ENCODE measurements at regions of chr2 and their contacts with region 1.

Region 1: GRCh38 chr2:128321784-128322714 is 3.4 kb upstream of the HS6ST1 start:
- DNase-seq: peak; percentile 86 to 94
- H3K4me3 ChIP-seq: peak overlapping the region; percentile 54 to 58
- H3K27ac ChIP-seq: peak overlapping the region; percentile 72 to 76
- H3K4me1 ChIP-seq: peaks cover 10 to 55% (median 41%) of the 10 kb centered on the region in 4 donors
- H3K27me3 ChIP-seq: no peaks in the 10 kb centered on the region
- CTCF ChIP-seq: peak; percentile 96 to 97

Region 2: DNA sequence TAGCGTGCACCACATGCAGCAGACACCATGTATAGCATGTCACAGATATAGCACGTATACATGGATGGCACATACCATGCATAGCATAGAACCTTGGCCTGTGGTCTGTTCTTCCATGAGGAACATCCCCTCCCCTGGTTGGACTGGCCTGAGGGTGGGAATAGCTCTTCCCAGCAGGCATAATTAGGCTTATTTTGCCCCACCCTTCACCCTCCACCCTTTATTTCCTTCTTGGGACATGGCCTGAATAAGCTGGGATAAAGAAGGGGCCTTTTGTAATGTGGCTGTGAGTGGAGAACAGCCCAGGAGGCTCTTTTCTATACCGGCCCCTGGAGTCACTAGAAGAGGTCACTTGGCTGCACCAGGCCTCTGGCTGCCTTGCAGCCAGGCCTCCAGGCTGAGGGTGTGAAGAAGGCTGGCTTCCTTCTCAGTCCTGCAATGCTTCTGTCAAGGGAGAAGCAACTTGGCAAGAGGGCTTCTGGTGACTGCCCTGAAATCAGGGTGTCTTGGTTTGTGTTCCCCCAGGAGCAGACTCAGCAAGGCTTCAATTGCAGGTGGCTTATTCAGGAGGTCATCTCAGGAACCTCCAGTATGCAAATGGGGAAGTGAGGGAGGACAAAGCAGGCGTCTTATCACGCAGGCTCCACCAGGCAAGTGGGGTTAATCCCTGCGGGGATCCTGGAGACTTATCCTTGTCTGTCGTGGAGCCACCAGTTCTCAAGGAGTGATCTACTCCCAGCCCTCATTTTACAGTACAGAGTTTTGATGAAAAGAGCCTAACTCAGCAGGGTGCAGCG is 71.6 kb before region 1 on chr2:
- intact Hi-C with region 1: no loop called
- DNase-seq: no peak
- H3K4me3 ChIP-seq: no peak overlapping the region
- H3K27ac ChIP-seq: no peak overlapping the region
- H3K4me1 ChIP-seq: no peaks in the 10 kb centered on the region
- H3K27me3 ChIP-seq: no peaks in the 10 kb centered on the region
- CTCF ChIP-seq: no peak

Region 3: DNA sequence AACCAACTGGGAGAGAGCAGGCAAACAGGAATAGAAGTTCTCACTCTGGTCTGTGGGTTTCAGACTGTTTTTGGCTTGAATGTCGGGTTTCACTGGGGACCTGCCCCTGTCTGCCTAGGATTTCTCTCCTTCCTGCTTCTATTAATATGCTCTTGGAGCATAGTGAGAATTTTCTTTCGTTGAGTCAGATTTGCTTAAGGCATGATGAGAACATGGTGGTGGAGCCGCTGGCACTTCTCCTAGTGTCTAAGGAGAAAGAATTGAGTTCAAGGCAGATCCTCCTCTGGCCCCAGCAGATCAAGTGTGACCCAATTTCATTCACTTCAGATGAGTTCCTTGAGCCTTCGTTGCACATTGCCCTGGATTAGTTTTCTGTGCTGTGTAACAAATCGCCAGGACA is 100.5 kb after region 1 on chr2:
- intact Hi-C with region 1: loop called (anchors 5 kb)
- DNase-seq: peak in 1 of 2 donors; percentile 80
- H3K4me3 ChIP-seq: no peak overlapping the region
- H3K27ac ChIP-seq: peak overlapping the region; percentile 62 to 83
- H3K4me1 ChIP-seq: peaks cover 0 to 43% (median 16%) of the 10 kb centered on the region in 4 donors
- H3K27me3 ChIP-seq: no peaks in the 10 kb centered on the region
- CTCF ChIP-seq: no peak

Region 4: DNA sequence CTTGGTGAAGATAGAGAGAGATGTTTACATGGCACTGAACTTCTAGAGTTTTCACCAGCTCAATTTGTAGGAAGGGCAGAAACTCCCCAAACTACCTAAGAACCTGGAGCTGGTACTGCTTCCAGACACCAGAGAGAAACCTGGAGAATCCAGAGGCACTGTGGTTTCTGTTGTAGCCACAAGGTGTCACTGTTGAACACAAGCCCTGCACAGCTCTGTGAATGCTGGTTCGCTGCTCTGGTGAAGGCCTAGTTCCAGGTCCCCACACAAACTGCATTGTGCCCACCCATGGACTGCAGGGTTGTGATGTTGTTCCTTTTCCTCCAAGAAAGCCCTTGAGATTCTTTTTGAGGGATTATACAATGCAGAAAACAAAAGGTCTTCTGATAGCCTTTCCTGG is 147.2 kb after region 1 on chr2:
- intact Hi-C with region 1: loop called (anchors 5 kb)
- DNase-seq: no peak
- H3K4me3 ChIP-seq: no peak overlapping the region
- H3K27ac ChIP-seq: no peak overlapping the region
- H3K4me1 ChIP-seq: peaks cover 0 to 34% (median 25%) of the 10 kb centered on the region in 4 donors
- H3K27me3 ChIP-seq: no peaks in the 10 kb centered on the region
- CTCF ChIP-seq: no peak

Region 5: GRCh38 chr2:128536925-128537620 is 215.0 kb after region 1 on chr2:
- intact Hi-C with region 1: loop called (anchors 10 kb)
- DNase-seq: no peak
- H3K4me3 ChIP-seq: no peak overlapping the region
- H3K27ac ChIP-seq: no peak overlapping the region
- H3K4me1 ChIP-seq: no peaks in the 10 kb centered on the region
- H3K27me3 ChIP-seq: no peaks in the 10 kb centered on the region
- CTCF ChIP-seq: no peak

Region 6: DNA sequence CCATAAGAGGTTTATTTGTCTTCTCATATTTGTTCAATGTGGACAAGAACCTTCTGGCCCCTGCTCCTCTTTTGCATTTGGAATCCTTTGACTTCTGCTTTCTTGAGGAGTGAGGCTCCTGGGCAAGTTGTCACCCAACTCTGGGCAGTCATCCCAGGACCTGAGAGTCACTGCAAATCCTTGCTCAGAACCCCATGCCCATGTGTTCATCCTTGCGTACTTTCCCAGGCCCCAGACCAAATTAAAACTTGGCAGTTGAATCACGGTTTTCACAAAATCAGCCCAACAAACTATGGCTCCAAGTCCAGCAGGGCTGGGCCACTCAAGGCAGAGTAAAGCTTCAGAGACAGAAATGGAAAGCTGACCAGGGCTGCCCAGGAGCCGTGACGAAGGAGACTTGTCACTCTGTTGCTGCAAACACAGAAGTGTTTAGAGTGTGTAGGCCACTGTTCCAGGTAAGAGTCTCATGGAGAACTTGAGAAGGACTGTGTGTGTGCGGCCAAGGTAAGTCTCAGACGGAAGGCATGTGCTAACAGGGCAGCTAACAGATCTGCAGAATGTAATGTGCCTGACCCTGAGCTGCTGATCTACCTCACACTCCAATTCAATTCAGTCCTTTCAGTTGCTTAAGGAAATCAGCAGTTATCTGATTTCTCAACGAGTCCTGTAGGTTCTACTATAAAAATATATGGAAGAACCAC is 546.0 kb after region 1 on chr2:
- intact Hi-C with region 1: no loop called
- DNase-seq: no peak
- H3K4me3 ChIP-seq: no peak overlapping the region
- H3K27ac ChIP-seq: no peak overlapping the region
- H3K4me1 ChIP-seq: no peaks in the 10 kb centered on the region
- H3K27me3 ChIP-seq: peaks cover 0 to 3% of the 10 kb centered on the region in 2 donors
- CTCF ChIP-seq: no peak

Region 7: DNA sequence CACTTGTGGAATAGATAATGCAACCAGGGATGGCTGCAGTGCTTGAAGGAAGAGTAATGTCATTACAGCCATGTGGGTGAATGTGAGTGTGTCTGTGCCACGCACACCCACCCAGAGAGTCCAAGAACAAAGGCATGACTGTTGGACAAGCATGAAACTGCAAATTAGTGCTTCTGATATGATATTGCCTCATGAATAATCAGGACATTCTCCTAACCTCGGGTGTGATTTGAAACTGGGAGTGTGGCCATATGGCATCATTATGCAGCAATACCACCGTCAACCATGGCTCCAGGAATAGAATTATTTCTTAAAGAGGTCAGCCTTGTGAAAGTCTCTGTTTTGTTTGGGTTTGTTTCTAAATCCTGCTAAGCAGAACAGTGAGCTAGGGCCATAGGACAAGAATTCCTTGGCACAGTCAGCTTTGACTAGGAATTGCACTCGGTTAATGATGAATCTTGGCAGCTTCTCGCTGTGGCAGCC is 979.4 kb after region 1 on chr2:
- intact Hi-C with region 1: loop called (anchors 10 kb)
- DNase-seq: peak; percentile 37 to 77
- H3K4me3 ChIP-seq: no peak overlapping the region
- H3K27ac ChIP-seq: peak overlapping the region; percentile 70 to 79
- H3K4me1 ChIP-seq: peaks cover 0 to 55% (median 42%) of the 10 kb centered on the region in 4 donors
- H3K27me3 ChIP-seq: no peaks in the 10 kb centered on the region
- CTCF ChIP-seq: peak; percentile 4 to 26